Endothelial cell of umbilical vein (primary cell): ENCODE measurements at regions of chr11 and their contacts with region 1.

Region 1: DNA sequence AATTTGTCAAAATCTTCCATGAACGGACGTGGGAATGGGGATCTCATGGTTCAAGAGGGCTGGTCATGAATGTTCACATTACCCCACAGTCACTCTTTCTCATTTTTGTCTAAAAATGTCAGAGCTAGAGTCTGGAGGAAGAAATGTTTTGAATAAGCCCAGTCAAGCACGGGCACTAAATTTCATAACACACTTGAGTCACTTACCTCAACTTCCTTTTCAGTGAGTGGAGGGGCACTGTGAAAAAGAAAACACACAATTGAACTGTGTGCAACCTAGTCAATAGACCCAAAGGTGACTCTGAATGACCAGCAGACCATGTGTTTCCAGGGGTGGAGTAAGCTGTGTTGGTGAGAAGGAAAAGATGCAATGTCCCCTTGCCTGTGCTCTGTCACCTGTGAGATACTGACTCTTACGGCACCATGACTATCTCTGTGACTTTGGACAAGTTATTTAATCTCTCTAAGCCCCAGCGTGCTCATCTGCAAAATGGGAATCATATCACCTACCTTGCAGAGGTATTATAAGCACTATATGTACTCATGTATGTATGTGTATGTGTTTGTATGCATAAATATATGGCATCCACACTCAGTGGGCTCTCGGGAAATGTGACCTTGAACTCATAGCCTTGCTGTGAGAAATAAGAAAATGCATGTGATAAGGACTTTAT is 38.2 kb upstream of the LYVE1 start:
- DNase-seq: peak; percentile 79
- H3K4me3 ChIP-seq: no peak overlapping the region
- H3K27ac ChIP-seq: peak overlapping the region; percentile 25
- H3K4me1 ChIP-seq: peaks cover 29% of the 10 kb centered on the region
- H3K27me3 ChIP-seq: peaks cover 0 to 1% of the 10 kb centered on the region in 2 experiments
- CTCF ChIP-seq: no peak
- POLR2A ChIP-seq: no peak

Region 2: GRCh38 chr11:10387206-10388083 is 219.2 kb before region 1 on chr11:
- CTCF ChIA-PET with region 1: no interaction called
- POLR2A ChIA-PET with region 1: no interaction called
- dilution Hi-C with region 1: no loop called
- intact Hi-C with region 1: no loop called
- DNase-seq: peak; percentile 58
- H3K4me3 ChIP-seq: no peak overlapping the region
- H3K27ac ChIP-seq: no peak overlapping the region
- H3K4me1 ChIP-seq: no peaks in the 10 kb centered on the region
- H3K27me3 ChIP-seq: peaks cover 3 to 9% of the 10 kb centered on the region in 2 experiments
- CTCF ChIP-seq: no peak
- POLR2A ChIP-seq: no peak

Region 3: DNA sequence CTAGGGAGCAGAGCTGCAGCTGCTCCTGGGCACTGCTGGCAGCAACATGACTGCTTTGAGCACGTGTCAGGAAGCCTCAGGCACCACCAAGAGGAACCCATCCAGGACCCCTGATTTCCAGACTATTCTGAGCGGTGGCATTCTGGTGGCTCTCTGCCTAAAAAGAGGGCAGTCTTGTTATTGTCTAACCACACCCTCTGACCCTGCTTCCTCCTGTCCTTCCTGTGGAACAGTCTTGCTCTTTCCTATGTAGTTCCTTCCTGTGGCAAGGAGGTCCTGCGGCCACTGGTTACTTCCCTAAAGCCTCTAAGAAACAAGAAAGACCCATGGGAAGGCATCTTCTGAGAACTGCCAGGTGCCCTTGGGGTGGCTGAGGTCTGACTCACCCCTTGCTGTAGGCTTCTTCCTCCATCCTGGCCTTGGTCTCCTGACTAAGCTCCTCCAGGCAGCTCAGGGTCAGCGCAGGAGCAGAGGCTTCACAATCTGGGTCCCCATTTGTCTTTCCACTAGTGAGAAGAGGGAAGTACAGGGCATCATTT is 25.1 kb before region 1 on chr11:
- CTCF ChIA-PET with region 1: interaction called, 10 read pairs
- POLR2A ChIA-PET with region 1: interaction called, 3 read pairs
- dilution Hi-C with region 1: no loop called
- intact Hi-C with region 1: no loop called
- DNase-seq: peak; percentile 71
- H3K4me3 ChIP-seq: no peak overlapping the region
- H3K27ac ChIP-seq: peak overlapping the region; percentile 65
- H3K4me1 ChIP-seq: peaks cover 38% of the 10 kb centered on the region
- H3K27me3 ChIP-seq: no peaks in the 10 kb centered on the region
- CTCF ChIP-seq: no peak
- POLR2A ChIP-seq: no peak

Region 4: GRCh38 chr11:10592331-10592730 is 14.3 kb before region 1 on chr11:
- CTCF ChIA-PET with region 1: interaction called, 15 read pairs
- POLR2A ChIA-PET with region 1: no interaction called
- dilution Hi-C with region 1: no loop called
- intact Hi-C with region 1: no loop called
- DNase-seq: peak; percentile 68
- H3K4me3 ChIP-seq: no peak overlapping the region
- H3K27ac ChIP-seq: no peak overlapping the region
- H3K4me1 ChIP-seq: peaks cover 13% of the 10 kb centered on the region
- H3K27me3 ChIP-seq: no peaks in the 10 kb centered on the region
- CTCF ChIP-seq: no peak
- POLR2A ChIP-seq: no peak

Region 5: GRCh38 chr11:10641177-10641911 is 34.7 kb after region 1 on chr11:
- CTCF ChIA-PET with region 1: no interaction called
- POLR2A ChIA-PET with region 1: no interaction called
- dilution Hi-C with region 1: no loop called
- intact Hi-C with region 1: loop called (anchors 5 kb)
- DNase-seq: no peak
- H3K4me3 ChIP-seq: no peak overlapping the region
- H3K27ac ChIP-seq: no peak overlapping the region
- H3K4me1 ChIP-seq: no peaks in the 10 kb centered on the region
- H3K27me3 ChIP-seq: no peaks in the 10 kb centered on the region
- CTCF ChIP-seq: no peak
- POLR2A ChIP-seq: no peak

Region 6: DNA sequence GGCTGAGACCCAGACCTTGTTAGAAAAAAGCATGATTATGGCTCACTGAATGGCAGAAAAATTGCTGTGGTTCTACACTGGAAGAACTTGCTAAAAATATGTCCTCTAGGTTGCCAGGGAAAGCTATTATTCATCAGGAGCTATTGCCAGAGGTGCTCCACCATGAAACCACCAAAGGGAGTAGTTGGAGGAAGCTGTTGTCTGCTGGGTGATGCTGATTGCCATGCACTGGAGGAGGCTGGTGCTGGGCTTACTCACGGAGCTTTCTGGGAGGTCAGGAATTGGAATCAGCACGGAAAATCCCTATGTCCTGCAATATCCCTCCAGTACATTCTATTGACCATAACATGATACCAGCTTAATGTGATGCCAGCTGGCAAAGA is 450.8 kb after region 1 on chr11:
- CTCF ChIA-PET with region 1: no interaction called
- POLR2A ChIA-PET with region 1: no interaction called
- dilution Hi-C with region 1: no loop called
- intact Hi-C with region 1: no loop called
- DNase-seq: no peak
- H3K4me3 ChIP-seq: no peak overlapping the region
- H3K27ac ChIP-seq: no peak overlapping the region
- H3K4me1 ChIP-seq: no peaks in the 10 kb centered on the region
- H3K27me3 ChIP-seq: peaks cover 0 to 1% of the 10 kb centered on the region in 2 experiments
- CTCF ChIP-seq: no peak
- POLR2A ChIP-seq: no peak